ENCODE measurements at regions of chr20 and their contacts with region 1.

Region 1: GRCh38 chr20:32652739-32653526 is 20.8 kb downstream of the C20orf203 start:
- ATAC-seq: peak; percentile 97 to 100 (median 99)
- H3K4me3 ChIP-seq: no peak overlapping the region
- H3K27ac ChIP-seq: no peak overlapping the region
- H3K4me1 ChIP-seq: peaks cover 4 to 5% of the 10 kb centered on the region in 2 donors

Region 2: DNA sequence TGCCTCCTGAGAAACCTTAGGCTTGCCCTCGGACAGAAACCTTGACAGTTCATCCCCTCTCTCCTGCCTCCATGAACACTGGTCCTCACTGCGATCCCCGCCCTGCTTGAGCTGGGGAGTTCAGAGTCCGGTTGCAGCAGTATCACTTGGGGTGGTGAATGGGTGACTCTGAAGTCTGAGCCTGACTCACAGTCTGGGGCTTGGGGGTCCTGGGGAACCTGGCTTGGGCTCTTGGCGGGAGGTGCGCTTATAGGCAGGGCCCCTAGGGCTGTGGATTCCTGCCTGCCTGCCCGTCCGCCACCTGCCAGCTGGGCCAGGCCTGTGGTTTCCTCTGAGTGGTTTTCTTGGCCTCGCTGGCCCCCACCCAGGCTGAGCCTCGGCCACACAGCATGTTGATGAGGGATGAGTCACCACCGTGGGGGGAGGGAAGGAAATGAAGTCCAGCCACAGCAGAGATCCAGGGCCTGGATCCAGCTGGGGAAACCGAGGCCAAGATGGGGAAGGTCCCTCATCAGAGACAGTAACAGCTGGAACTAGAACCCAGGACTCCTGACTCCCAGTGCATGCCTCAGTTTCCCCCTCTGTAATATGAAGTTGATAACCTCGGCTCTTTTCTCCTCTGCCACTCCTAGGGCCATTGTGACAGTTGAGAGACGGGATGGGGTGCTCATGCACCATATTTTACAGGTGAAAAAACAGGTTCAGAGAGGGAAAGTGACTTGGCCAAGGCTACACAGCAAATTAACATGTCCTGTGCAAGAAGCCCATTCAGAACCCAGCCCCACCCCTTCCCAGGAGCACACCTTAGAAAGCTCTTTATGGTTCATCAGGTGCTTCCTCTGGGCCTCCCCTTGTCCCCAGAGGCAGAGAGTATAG is 816.7 kb before region 1 on chr20:
- in situ Hi-C with region 1: loop called in 1 of 9 experiments (anchors 25 kb)
- ATAC-seq: peak; percentile 83 to 91 (median 88)
- H3K4me3 ChIP-seq: no peak overlapping the region
- H3K27ac ChIP-seq: peak overlapping the region in 1 of 2 donors; percentile 10
- H3K4me1 ChIP-seq: peaks cover 8 to 18% of the 10 kb centered on the region in 2 donors

Region 3: DNA sequence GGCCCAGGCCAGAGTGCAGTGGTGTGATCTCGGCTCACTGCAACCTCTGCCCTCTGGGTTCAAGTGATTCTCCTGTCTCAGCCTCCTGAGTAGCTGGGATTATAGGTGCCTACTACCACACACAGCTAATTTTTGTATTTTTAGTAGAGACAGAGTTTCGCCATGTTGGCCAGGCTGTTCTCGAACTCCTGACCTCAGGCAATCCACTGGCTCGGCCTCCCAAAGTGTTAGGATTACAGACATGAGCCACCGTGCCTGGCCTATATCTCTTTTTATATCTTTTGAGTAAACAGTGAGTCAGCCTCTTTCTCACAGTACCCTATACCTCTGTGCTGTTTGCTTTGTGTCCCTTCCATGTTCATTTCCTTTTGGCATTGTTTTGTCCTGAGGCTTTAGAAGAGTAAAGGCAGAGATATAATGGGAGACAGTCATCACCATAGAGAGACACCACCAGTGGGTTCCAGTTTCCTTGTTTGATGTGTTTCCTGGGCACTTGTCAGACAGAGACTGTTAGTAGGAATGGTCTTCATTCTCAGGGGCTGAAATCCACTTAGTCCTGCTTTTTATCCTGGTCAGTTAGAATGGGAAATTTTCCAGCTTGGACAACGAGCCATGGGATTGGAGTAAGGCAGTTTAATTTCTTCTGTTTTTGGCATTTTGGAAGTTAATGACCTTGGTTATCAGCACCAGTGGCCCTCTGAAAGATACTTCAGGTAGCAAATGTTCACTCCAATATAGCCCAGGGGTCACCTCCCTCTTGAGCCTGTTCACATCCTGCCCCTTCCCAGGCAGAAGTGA is 327.0 kb before region 1 on chr20:
- in situ Hi-C with region 1: no loop called
- ATAC-seq: peak in 4 of 8 experiments; percentile 11 to 91 (median 70)
- H3K4me3 ChIP-seq: no peak overlapping the region
- H3K27ac ChIP-seq: no peak overlapping the region
- H3K4me1 ChIP-seq: peaks cover 0 to 14% of the 10 kb centered on the region in 2 donors

Region 4: DNA sequence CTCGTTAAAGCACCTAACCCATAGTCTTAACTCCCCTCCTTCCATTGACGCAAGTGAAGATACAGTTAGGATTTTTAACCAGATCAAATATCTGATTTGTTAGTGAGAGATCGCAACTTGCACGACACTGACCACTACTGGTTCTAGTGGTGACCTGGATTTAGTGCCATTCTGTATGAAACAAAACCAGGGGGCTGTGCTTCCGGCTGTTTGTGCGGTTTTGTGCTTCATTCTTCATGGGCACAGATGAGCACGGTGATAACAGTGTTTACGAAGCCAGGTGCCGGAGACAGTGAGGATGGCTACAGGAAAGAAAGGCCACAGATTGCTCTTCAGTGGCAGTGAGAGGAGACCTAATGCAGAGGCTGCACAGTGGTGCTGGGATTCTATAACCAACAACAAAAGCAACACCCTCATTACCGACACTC is 143.3 kb before region 1 on chr20:
- in situ Hi-C with region 1: loop called in 3 of 9 experiments (anchors 10 to 25 kb)
- ATAC-seq: peak in 2 of 8 experiments; percentile 19 to 34
- H3K4me3 ChIP-seq: no peak overlapping the region
- H3K27ac ChIP-seq: no peak overlapping the region
- H3K4me1 ChIP-seq: peaks cover 19 to 24% of the 10 kb centered on the region in 2 donors

Region 5: GRCh38 chr20:32516583-32517517 is 136.1 kb before region 1 on chr20:
- in situ Hi-C with region 1: loop called (anchors 5 to 25 kb)
- ATAC-seq: peak in 7 of 8 experiments; percentile 7 to 71 (median 49)
- H3K4me3 ChIP-seq: no peak overlapping the region
- H3K27ac ChIP-seq: peak overlapping the region in 1 of 2 donors; percentile 7
- H3K4me1 ChIP-seq: peaks cover 15 to 22% of the 10 kb centered on the region in 2 donors

Region 6: DNA sequence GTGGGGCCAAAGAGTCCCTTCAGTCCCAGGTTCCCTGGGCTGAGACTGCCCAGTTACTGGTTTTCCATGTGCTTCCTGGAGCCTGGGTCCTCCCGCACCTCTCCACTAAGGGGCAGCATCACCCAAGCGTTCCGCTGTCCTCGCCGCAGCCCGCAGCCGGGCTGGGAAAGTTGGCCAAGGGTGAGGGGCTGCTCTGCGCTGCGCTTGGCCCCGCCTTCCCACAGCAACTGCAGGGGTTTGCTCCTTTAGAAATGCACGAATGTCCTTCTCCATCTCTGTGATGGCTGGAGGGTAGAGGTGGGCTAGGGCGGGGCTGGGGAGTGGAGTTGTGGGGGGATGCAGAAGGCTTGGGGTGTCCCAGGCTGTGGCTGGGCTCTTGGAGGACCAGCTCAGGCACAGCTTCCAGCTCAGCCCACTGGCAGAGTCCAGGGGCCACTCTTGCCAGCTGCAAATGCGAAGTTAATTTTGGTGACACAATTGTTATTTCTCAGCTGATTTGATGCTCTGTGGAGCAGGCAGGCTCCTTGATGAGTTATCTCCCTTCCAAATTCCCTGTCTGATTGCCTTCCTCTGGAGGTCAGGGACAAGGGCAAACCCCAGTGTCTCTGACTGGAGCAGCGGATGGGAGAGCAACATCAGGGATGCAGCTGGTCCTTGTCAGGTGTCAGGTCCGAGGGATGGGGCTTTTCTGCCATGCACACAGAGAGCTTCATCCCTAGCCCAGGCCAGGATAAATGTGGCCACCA is 131.0 kb before region 1 on chr20:
- in situ Hi-C with region 1: loop called (anchors 5 to 25 kb)
- ATAC-seq: peak; percentile 57 to 92 (median 80)
- H3K4me3 ChIP-seq: no peak overlapping the region
- H3K27ac ChIP-seq: peak overlapping the region; percentile 17 to 41
- H3K4me1 ChIP-seq: peaks cover 40 to 50% of the 10 kb centered on the region in 2 donors